ENCODE measurements at regions of chr15 and their contacts with region 1.

Region 1: GRCh38 chr15:66700802-66701421 is 1.1 kb upstream of the SMAD6 start:
- DNase-seq: peak; percentile 91
- ATAC-seq: peak; percentile 80
- H3K4me3 ChIP-seq: peak overlapping the region; percentile 68
- H3K27ac ChIP-seq: peak overlapping the region; percentile 90
- H3K4me1 ChIP-seq: peaks cover 9% of the 10 kb centered on the region
- H3K27me3 ChIP-seq: no peaks in the 10 kb centered on the region
- CTCF ChIP-seq: no peak
- POLR2A ChIP-seq: no peak; the same call in 1 of the 2 replicates
- RAD21 ChIP-seq: no peak

Region 2: GRCh38 chr15:66603301-66604179 is 97.4 kb before region 1 on chr15:
- CTCF ChIA-PET with region 1: interaction called, 3 read pairs
- POLR2A ChIA-PET with region 1: no interaction called
- dilution Hi-C with region 1: no loop called
- in situ Hi-C with region 1: no loop called
- intact Hi-C with region 1: loop called (anchors 1 kb)
- DNase-seq: peak; percentile 62
- ATAC-seq: peak; percentile 99
- H3K4me3 ChIP-seq: no peak overlapping the region
- H3K27ac ChIP-seq: no peak overlapping the region
- H3K4me1 ChIP-seq: no peaks in the 10 kb centered on the region
- H3K27me3 ChIP-seq: peaks cover 19% of the 10 kb centered on the region
- CTCF ChIP-seq: peak; percentile 93
- POLR2A ChIP-seq: no peak
- RAD21 ChIP-seq: peak; percentile 94

Region 3: GRCh38 chr15:66619151-66619903 is 81.6 kb before region 1 on chr15:
- CTCF ChIA-PET with region 1: interaction called, 3 read pairs
- POLR2A ChIA-PET with region 1: no interaction called
- dilution Hi-C with region 1: no loop called
- in situ Hi-C with region 1: loop called (anchors 5 kb)
- intact Hi-C with region 1: loop called (anchors 1 kb)
- DNase-seq: peak; percentile 68
- ATAC-seq: peak; percentile 92
- H3K4me3 ChIP-seq: no peak overlapping the region
- H3K27ac ChIP-seq: no peak overlapping the region
- H3K4me1 ChIP-seq: peaks cover 15% of the 10 kb centered on the region
- H3K27me3 ChIP-seq: no peaks in the 10 kb centered on the region
- CTCF ChIP-seq: peak; percentile 94
- POLR2A ChIP-seq: no peak
- RAD21 ChIP-seq: peak; percentile 85

Region 4: DNA sequence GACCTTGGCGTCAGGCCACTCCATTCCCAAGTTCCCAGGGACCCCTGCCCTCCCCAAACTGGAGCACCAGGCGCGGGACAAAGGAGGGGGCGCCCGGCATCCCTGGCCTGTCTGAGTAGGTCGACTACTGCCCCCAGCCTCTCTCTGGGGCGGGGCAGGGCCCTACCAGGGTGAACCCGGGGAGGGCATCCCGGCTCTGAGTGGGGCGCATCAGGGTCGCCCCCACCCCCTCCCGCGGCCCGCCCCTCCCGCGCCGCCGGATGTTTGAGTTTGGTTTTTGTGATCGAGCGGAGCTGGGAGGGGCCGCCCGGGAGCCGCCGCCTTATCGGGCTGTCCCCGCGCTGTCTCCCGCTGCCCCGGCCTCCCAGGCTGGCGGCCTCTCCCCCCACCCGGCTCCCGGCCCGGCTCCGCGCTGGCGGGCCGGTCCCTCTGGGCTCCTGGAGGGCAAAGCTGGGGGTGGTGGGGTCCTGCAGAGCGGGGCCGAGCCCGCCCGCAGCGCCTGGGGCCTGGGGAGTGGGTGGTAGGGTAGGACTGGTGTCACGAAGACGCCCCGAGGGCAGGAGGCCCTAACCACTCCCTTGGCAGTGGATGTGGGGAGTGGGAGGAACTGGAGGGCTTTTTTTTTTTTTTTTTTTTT is 46.1 kb before region 1 on chr15:
- CTCF ChIA-PET with region 1: no interaction called
- POLR2A ChIA-PET with region 1: no interaction called
- dilution Hi-C with region 1: no loop called
- in situ Hi-C with region 1: no loop called
- intact Hi-C with region 1: no loop called
- DNase-seq: no peak
- ATAC-seq: 0 out of 2 replicates have a peak, but pooled peaks have one; percentile 50
- H3K4me3 ChIP-seq: no peak overlapping the region
- H3K27ac ChIP-seq: no peak overlapping the region
- H3K4me1 ChIP-seq: peaks cover 2% of the 10 kb centered on the region; the same call in 1 of the 2 replicates
- H3K27me3 ChIP-seq: peaks cover 7% of the 10 kb centered on the region; the same call in 1 of the 2 replicates
- CTCF ChIP-seq: no peak
- POLR2A ChIP-seq: no peak
- RAD21 ChIP-seq: no peak

Region 5: DNA sequence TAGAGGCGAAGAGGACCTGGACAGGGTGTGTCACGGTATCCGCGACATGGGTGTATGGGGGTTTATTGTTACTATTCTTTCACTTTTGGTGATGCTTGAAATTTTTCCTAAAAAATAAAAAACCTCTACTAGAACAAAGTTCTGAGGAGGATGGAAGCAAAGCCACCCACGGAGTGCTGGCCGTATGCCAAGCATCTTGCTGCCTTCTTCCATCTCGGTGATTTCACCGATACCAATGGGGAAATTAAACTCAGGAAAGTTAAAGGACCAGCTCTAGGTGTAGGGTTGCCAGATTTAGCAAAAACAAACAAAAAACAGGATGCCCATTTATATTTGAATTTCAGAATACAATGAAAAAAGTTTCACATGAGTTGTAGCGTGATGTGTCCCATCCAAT is 35.0 kb after region 1 on chr15:
- CTCF ChIA-PET with region 1: no interaction called
- POLR2A ChIA-PET with region 1: no interaction called
- dilution Hi-C with region 1: no loop called
- in situ Hi-C with region 1: no loop called
- intact Hi-C with region 1: no loop called
- DNase-seq: no peak
- ATAC-seq: no peak
- H3K4me3 ChIP-seq: no peak overlapping the region
- H3K27ac ChIP-seq: no peak overlapping the region
- H3K4me1 ChIP-seq: peaks cover 19% of the 10 kb centered on the region
- H3K27me3 ChIP-seq: no peaks in the 10 kb centered on the region
- CTCF ChIP-seq: no peak
- POLR2A ChIP-seq: no peak
- RAD21 ChIP-seq: no peak

Region 6: DNA sequence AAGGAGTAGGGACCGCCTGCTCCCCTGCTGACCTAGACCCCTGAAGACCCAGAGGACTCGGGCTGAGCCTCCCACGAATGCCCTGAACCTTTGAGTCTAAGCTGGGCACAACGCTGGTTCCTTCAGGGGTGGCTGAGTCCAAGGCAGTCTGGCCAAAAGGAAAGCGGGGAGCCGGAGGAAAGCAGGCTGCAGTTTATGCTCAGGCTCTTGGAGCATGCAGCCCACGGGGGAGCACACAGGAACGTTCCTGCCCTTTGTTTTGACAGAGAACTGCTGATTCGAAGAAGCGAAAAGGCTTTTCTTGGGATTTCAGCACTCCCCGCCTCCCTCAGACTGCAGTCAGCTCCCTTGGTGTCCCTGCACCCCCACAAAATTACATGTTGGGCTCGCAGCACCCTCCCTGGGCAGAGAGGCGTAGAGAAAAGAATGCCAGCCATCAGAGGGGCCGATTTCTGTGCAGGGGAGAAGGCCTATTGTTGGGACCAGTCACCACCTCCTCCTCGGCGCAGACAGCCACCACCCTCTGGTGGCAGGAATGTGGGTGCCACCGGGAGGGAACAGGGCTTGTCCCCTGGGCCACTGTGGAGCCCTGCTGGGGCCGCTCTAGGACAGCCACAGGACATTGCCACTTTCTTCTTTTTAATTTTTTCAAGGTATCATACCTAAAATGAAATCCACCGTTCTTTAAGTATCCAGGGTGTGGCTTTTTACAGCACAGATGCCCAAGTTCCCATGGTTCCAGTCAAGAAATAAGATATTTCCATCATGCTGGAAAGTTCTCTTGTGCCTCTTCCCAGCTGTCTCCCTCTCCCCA is 73.3 kb after region 1 on chr15:
- CTCF ChIA-PET with region 1: interaction called, 8 read pairs
- POLR2A ChIA-PET with region 1: no interaction called
- dilution Hi-C with region 1: no loop called
- in situ Hi-C with region 1: loop called (anchors 5 kb)
- intact Hi-C with region 1: loop called (anchors 2 kb)
- DNase-seq: peak; percentile 64
- ATAC-seq: peak; percentile 79
- H3K4me3 ChIP-seq: no peak overlapping the region
- H3K27ac ChIP-seq: peak overlapping the region; percentile 61
- H3K4me1 ChIP-seq: peaks cover 49% of the 10 kb centered on the region
- H3K27me3 ChIP-seq: no peaks in the 10 kb centered on the region
- CTCF ChIP-seq: peak; percentile 98
- POLR2A ChIP-seq: no peak
- RAD21 ChIP-seq: peak; percentile 90

Region 7: DNA sequence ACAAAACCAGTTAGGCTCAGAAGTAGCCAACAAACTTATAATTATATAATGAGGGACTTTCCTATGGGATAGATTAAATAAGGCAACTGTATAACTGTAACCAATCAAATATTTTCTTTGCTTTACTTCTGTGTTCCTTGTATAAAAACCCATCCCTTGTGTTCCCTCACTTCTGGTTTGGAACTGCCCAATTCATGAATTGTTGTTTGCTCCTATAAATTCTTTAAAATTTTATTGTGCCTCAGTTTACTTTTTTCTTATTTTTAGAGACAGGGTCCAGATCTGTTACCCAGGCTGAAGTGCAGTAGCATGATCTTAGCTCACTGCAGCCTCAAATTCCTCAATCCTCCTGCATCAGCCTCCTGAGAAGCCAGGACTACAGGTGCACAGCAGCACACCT is 156.8 kb after region 1 on chr15:
- CTCF ChIA-PET with region 1: no interaction called
- POLR2A ChIA-PET with region 1: no interaction called
- dilution Hi-C with region 1: no loop called
- in situ Hi-C with region 1: no loop called
- intact Hi-C with region 1: no loop called
- DNase-seq: no peak
- ATAC-seq: no peak
- H3K4me3 ChIP-seq: no peak overlapping the region
- H3K27ac ChIP-seq: no peak overlapping the region
- H3K4me1 ChIP-seq: peaks cover 5% of the 10 kb centered on the region
- H3K27me3 ChIP-seq: no peaks in the 10 kb centered on the region
- CTCF ChIP-seq: no peak
- POLR2A ChIP-seq: no peak
- RAD21 ChIP-seq: no peak